H1 (cell line): ENCODE measurements at regions of chr17 and their contacts with region 1.

Region 1: GRCh38 chr17:11986942-11987329 is 10.3 kb downstream of the ZNF18 start:
- DNase-seq: no peak
- H3K4me3 ChIP-seq: no peak overlapping the region
- H3K27ac ChIP-seq: no peak overlapping the region
- H3K4me1 ChIP-seq: peaks cover 0 to 13% (median 7%) of the 10 kb centered on the region in 4 experiments
- H3K27me3 ChIP-seq: no peaks in the 10 kb centered on the region
- CTCF ChIP-seq: peak in 2 of 3 experiments; percentile 32 to 43; a peak in 2 of 4 replicates
- EP300 ChIP-seq: no peak
- POLR2A ChIP-seq: no peak
- RAD21 ChIP-seq: peak; percentile 63 to 67

Region 2: DNA sequence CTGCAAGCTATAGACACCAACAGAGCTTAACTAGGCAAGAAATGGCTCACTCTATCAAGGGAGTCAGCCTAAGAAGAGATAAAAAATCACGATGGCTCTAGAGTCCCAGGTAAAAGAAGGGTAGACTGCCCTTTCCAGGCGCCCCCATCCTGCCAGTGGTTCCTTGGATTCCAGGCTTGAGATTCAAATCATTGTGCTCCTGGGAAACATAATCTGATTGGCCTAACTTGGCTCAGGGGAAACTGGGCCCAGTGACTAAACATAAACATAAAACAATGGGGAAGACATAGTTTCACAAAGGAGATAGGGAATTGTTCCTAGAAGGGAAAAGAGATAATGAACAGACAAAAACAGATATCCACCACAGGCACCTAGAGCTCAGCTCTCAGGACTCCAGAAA is 46.0 kb before region 1 on chr17:
- CTCF ChIA-PET with region 1: interaction called, 14 read pairs
- POLR2A ChIA-PET with region 1: no interaction called
- DNase-seq: no peak
- H3K4me3 ChIP-seq: no peak overlapping the region
- H3K27ac ChIP-seq: no peak overlapping the region
- H3K4me1 ChIP-seq: no peaks in the 10 kb centered on the region; a peak in 1 of 7 replicates
- H3K27me3 ChIP-seq: no peaks in the 10 kb centered on the region
- CTCF ChIP-seq: no peak
- EP300 ChIP-seq: no peak
- POLR2A ChIP-seq: no peak
- RAD21 ChIP-seq: no peak